ENCODE measurements at regions of chr1 and their contacts with region 1.

Region 1: DNA sequence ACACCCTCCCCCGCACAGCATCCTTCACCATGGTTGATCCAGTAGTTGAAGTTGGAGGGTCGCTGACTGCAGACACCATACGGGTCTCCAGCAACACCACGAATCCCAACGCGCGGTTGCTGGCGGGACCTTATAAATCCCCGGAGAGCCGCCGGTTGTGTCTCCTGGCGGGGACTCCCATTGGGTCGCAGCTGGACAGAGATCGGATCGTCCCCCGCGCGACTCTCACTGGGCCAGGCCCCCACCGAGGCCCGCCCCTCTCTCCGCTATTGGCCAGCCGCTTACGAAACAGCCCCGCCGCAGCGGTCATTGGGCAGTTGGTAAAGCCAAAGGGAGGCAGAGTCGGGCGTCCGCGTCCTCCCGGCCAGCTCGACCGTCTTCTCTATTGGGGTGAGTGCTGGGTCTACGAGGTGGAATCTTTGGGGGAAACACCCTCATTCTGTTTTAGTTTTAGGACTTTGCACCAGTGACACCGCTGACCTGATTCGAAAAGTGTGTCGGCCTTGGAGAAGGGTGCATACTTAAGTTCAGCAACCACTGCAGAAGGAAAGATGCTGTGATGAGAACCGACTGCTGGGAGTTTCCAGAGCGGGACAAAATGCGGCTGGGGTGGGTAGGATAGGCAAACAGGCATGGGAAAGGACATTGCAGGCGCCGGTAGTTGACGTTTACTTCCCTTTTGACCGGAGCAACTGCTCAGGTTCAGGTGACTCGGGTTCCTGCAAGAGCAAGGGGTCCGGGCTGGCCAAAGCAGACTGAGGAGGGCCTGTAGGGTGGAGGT is 27.3 kb downstream of the RABIF start:
- DNase-seq: peak; percentile 87 to 94
- H3K4me3 ChIP-seq: peak overlapping the region; percentile 57
- H3K27ac ChIP-seq: no peak overlapping the region
- H3K4me1 ChIP-seq: peaks cover 22% of the 10 kb centered on the region
- H3K27me3 ChIP-seq: no peaks in the 10 kb centered on the region
- CTCF ChIP-seq: no peak

Region 2: DNA sequence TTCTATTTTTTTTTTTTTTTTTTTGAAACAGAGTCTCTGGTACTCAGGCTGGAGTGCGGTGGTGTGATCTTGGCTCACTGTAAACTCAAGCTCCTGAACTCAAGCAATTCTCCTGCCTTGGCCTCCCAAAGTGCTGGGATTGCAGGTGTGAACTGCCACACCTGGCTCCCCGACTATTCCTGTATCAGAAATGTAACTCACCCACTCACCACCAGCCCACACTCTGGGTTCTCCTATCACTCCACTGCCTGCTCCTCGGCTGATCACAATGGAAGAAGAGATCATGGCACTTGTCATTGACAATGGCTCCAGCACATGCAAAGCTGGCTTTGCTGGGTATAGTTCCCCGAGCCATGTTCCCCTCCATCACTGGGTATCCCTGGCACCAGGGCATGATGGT is 11.4 kb after region 1 on chr1:
- CTCF ChIA-PET with region 1: no interaction called
- POLR2A ChIA-PET with region 1: interaction called, 36 read pairs
- intact Hi-C with region 1: no loop called
- DNase-seq: no peak
- H3K4me3 ChIP-seq: no peak overlapping the region
- H3K27ac ChIP-seq: no peak overlapping the region
- H3K4me1 ChIP-seq: no peaks in the 10 kb centered on the region; the same call in 1 of the 2 replicates
- H3K27me3 ChIP-seq: no peaks in the 10 kb centered on the region
- CTCF ChIP-seq: no peak

Region 3: GRCh38 chr1:202888531-202889360 is 27.1 kb after region 1 on chr1 and contains the start of gene RABIF:
- CTCF ChIA-PET with region 1: no interaction called
- POLR2A ChIA-PET with region 1: interaction called, 10 read pairs
- intact Hi-C with region 1: loop called (anchors 2 kb)
- DNase-seq: peak; percentile 90 to 97
- H3K4me3 ChIP-seq: peak within 1 kb of the TSS; percentile 89
- H3K27ac ChIP-seq: peak within 1 kb of the TSS; percentile 70
- H3K4me1 ChIP-seq: peaks cover 16% of the 10 kb centered on the region
- H3K27me3 ChIP-seq: no peaks in the 10 kb centered on the region
- CTCF ChIP-seq: no peak
- total RNA-seq, gene RABIF: 9.4 and 10.9 TPM in 2 replicates

Region 4: GRCh38 chr1:203280996-203281395 is 419.4 kb after region 1 on chr1:
- CTCF ChIA-PET with region 1: no interaction called
- POLR2A ChIA-PET with region 1: interaction called, 14 read pairs
- intact Hi-C with region 1: no loop called
- DNase-seq: peak in 1 of 2 experiments; percentile 41
- H3K4me3 ChIP-seq: no peak overlapping the region
- H3K27ac ChIP-seq: no peak overlapping the region
- H3K4me1 ChIP-seq: no peaks in the 10 kb centered on the region
- H3K27me3 ChIP-seq: peaks cover 12% of the 10 kb centered on the region; the same call in 1 of the 2 replicates
- CTCF ChIP-seq: no peak; the same call in 1 of the 2 replicates